ENCODE measurements at regions of chr2 and their contacts with region 1.

Region 1: DNA sequence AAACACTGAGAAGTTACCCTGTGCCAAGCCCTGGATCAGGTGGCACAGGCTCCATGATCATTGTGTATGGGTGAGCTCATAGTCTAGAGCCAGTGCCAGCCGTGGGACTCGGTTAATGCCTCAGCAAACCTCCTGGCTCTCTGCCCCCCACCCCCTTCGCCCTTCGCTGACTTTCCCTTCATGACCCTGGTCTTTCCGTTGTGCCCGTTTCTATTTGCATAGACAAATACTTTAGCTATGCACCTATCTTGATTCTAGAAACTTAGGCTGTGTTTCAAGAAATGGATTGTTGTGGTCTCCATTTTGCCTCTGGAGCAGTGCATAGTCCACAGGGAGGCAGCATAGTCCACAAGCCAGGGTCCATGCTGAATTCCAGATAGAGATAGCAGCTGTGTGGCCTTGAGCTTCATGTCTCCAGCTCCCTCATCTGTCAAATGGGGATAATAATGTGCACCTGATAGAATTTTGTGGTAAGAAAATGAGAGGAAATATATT is 44.8 kb upstream of the KDM3A start:
- DNase-seq: no peak
- H3K4me3 ChIP-seq: no peak overlapping the region
- CTCF ChIP-seq: peak; percentile 56

Region 2: GRCh38 chr2:86221066-86221684 is 175.2 kb before region 1 on chr2:
- in situ Hi-C with region 1: loop called (anchors 25 kb)
- DNase-seq: peak; percentile 48
- H3K4me3 ChIP-seq: no peak overlapping the region
- CTCF ChIP-seq: peak; percentile 98

Region 3: DNA sequence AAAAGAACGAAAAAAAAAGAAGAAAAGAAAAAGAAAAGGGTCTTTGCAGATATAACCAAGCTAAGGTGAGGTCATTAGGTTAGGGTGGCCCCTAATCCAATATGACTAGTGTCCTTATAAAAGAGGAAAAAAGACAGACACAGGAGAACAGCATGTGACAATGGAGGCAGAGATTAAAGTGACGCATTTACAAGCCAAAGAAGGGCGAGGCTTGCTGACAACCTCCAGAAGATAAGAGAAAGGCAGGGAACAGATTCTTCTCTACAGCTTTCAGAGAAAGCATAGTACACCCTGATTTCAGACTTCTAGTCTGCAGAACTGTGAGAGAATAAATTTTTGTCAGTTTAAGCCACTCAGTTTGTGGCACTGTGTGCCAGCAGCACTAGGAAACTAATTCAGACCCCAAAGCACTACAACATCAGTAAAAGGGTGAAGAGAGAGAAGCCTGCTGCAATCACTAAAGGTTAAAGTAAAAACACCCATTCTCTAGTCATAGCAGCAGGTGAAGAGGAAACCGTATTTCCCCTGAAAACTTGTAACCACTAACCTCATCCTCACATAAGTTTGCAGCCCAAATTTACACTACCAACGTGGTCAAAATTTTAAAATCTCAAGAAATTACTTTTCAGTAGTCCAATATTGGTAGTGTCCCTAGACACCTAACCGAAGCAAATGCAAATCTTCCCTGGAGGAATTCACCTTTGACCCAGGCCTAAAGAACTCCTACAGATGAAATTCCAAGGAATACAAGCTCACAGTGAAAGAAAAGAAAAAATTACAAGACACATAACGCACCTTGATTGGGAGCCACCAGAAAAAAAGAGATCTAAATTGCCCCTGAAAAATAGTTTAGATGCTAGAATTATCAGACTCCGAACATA is 76.4 kb before region 1 on chr2:
- in situ Hi-C with region 1: loop called (anchors 5 kb)
- DNase-seq: no peak
- H3K4me3 ChIP-seq: no peak overlapping the region
- CTCF ChIP-seq: no peak

Region 4: DNA sequence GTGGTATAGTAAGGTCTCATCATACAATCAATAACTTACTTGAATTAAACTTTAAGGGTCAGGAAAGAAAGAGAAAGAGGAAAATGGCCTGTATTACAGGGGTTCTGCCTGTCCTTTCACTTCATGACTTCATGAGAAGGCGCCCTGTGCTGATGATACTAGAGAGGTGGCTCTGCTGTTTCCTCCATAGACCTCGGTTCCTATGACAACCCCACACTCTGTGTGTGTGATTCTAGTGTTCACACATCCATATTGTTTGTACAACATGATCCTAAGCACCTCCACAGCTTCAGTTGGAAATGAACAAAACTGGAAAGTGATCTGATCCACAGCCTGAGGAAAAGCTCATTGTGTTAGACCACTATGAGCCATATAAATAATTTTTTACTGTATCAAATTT is 51.9 kb before region 1 on chr2:
- in situ Hi-C with region 1: no loop called
- DNase-seq: no peak
- H3K4me3 ChIP-seq: no peak overlapping the region
- CTCF ChIP-seq: no peak

Region 5: GRCh38 chr2:86464652-86465051 is 68.3 kb after region 1 on chr2:
- in situ Hi-C with region 1: no loop called
- DNase-seq: no peak
- H3K4me3 ChIP-seq: no peak overlapping the region
- CTCF ChIP-seq: no peak

Region 6: DNA sequence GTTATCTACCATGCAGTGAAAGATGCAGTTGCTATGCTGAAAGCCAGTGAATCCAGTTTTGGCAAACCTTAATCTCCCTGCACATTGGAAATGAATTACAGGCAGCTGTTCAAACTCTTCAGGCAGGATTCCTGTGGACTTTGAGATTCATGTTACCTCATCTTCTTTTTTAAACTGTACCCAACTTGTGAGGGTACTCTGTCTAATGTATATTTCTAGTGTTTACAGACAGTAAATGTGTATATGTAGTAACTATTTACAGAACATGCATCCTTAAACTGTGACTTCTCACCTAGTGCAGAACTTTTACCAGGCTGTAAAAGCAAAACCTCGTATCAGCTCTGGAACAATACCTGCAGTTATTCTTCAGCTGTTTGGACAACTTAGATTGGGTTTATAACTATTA is 95.7 kb after region 1 on chr2:
- in situ Hi-C with region 1: loop called (anchors 5 kb)
- DNase-seq: no peak
- H3K4me3 ChIP-seq: no peak overlapping the region
- CTCF ChIP-seq: no peak